ENCODE measurements at regions of chr17 and their contacts with region 1.

Region 1: DNA sequence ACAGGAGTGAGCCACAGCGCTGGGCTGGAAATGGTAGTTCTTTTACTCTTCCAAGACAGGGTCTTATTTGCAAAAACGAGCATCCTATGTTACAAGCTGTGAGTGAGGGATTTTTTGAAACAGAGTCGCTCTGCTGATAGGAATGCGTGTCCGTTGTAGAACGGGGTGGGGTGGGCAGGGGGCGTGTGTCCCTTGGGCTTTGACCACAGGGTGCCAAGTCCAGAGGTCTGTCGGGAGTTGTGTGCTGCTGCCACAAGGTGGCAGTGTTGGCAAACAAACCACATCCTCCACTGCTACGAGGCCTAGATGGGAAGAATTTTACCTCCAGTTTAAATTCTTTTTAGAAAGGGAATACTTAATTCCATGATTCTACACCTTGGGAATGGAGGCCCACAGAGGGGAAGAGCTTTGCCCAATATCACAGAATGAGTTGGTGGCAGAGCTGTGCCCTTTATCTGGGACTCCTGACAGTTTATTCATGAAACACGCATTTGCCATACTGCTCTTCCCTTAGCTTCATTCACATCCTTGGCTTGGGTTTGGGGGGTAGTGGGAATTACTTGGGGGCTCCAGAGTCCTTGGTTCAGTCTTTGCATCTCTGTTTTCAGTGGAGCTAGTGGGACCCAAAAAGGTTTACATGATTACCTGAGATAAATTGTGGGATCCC is 30.6 kb upstream of the ETV4 start:
- DNase-seq: peak; percentile 72
- ATAC-seq: peak; percentile 71

Region 2: DNA sequence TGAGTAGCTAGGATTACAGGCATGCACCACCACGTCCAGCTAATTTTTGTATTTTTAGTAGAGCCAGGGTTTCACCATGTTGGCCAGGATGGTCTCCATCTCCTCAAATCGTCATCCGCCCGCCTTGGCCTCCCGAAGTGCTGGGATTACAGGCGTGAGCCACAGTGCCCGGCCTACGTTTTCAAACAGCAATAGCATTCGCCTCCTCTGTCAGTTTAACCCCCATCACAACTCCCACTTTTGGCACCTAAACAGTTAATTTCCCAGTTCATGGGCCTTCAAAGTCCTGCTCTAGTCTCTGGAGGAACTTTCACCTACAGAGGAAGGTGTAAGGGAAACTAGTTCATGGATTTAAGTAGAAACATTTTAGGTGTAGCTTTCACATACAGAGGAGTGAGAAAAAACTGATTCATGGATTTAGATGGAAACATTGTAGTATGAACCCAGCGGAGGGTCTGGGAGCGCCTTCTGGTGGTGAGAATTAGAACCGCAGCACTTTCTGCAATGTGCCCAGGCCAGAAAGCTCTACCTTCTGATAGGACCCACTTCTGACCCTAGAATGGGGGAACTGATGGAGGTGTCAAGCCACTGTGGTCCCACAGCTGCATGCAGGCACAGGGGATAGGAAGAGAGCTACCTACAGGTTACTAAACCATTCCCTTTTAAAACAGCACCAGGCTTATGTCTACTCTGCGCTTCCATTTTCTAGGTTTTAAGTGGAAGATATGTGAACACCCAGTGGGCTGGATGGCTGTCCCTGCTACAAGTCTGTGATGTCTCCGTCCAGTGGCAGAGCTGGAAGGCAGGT is 97.0 kb after region 1 on chr17:
- intact Hi-C with region 1: loop called (anchors 1 kb)
- DNase-seq: peak; percentile 85
- ATAC-seq: peak; percentile 61

Region 3: DNA sequence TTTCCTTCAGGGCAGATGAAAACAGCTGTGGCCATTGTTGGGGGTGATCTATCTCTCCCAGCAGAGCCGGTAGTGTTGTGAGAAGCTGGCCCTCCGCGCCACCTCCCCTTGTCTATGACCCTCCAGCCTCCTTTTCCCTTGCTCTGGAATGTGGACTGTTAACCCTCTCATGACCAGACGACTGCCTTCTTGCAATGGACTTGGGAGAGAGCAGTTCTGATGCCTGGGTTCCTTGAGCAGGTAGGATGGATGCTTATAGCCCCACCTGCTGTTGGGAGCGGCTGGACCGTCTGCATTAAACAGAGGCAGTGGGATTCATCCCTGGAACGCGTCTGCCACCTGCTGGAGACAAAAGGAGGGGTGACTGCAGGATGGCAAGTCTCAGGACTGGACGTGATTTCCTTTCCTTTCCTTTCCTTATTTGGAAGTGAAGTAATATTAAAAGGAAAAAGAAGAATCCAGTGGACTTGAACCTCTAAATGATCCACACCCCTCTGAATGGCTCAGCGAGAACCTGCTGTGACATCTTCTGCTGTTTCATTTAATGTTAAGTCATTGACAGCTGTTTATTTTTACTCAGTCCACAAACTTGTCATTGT is 183.7 kb after region 1 on chr17:
- intact Hi-C with region 1: loop called (anchors 5 kb)
- DNase-seq: peak; percentile 93
- ATAC-seq: peak; percentile 90